ENCODE measurements at regions of chr2 and their contacts with region 1.

Region 1: GRCh38 chr2:9555297-9556141 is at the start of gene ADAM17:
- DNase-seq: peak; percentile 96 to 97 (median 97)
- H3K4me3 ChIP-seq: peak within 1 kb of the TSS; percentile 68 to 100 (median 99)
- H3K4me3 Mint-ChIP-seq: peak within 1 kb of the TSS; percentile 96 to 98
- H3K27ac ChIP-seq: peak within 1 kb of the TSS; percentile 98 to 99
- H3K27ac Mint-ChIP-seq: peak within 1 kb of the TSS; percentile 98 to 100 (median 99)
- H3K4me1 ChIP-seq: peaks cover 45 to 54% of the 10 kb centered on the region in 2 donors
- H3K4me1 Mint-ChIP-seq: peaks cover 46% of the 10 kb centered on the region
- H3K27me3 ChIP-seq: no peaks in the 10 kb centered on the region
- H3K27me3 Mint-ChIP-seq: peaks cover 0 to 6% (median 4%) of the 10 kb centered on the region in 3 donors
- CTCF ChIP-seq: no peak
- polyA plus RNA-seq, gene ADAM17: 30.2 to 34.8 (median 30.9) TPM

Region 2: DNA sequence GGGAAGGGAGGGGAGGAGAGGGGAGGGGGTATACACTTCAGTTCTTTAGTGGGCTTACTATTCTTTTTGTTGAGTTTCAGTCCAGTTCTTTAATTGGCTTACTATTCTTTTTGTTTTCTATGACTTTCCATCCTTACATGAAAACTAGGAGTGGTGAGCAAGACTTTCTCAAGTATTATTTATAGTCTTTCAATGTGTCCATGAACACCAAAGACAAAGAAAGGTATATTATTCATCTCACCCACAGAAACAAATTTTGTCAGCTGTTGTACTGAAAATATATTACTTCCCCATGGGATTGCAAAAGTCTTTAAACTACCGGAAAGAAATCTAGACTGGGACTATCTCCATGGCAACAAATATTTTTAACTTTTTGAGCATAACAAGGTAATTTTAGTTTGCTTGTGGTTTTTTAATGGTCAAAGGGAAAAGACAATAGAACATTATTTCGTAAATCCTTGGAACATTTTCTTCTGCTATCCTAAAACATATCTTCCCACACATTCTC is 17.5 kb before region 1 on chr2:
- intact Hi-C with region 1: loop called (anchors 1 to 2 kb)
- DNase-seq: peak; percentile 83 to 99 (median 90)
- H3K4me3 ChIP-seq: peak overlapping the region in 1 of 3 experiments; percentile 36
- H3K4me3 Mint-ChIP-seq: no peak overlapping the region
- H3K27ac ChIP-seq: peak overlapping the region; percentile 80 to 93
- H3K27ac Mint-ChIP-seq: peak overlapping the region; percentile 95 to 99 (median 97)
- H3K4me1 ChIP-seq: peaks cover 20 to 37% of the 10 kb centered on the region in 2 donors
- H3K4me1 Mint-ChIP-seq: peaks cover 41% of the 10 kb centered on the region
- H3K27me3 ChIP-seq: no peaks in the 10 kb centered on the region
- H3K27me3 Mint-ChIP-seq: peaks cover 0 to 1% (median 1%) of the 10 kb centered on the region in 3 donors
- CTCF ChIP-seq: no peak

Region 3: DNA sequence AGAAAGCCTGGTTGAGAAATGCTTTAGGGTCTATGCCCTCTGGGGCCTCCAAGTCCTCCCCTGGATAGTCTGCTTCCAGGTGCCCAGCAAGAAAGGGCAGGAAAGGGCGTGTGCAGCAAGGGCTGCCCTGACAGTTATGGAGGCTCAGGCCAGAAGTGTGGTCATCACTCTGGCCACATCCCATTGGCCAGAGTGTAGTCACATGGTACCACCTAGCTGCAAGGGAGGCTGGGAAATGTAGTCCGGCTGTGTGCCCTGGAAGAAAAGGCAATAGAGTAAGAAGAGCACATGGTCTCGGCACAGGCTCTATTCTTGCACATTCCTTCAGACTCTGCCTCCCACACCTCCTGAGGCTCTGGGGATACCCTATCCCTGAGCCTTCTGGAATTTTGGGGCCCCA is 856.9 kb after region 1 on chr2:
- intact Hi-C with region 1: no loop called
- DNase-seq: peak; percentile 49 to 68 (median 61)
- H3K4me3 ChIP-seq: no peak overlapping the region
- H3K4me3 Mint-ChIP-seq: no peak overlapping the region
- H3K27ac ChIP-seq: peak overlapping the region in 1 of 2 donors; percentile 87
- H3K27ac Mint-ChIP-seq: peak overlapping the region; percentile 33 to 98 (median 94)
- H3K4me1 ChIP-seq: peaks cover 41 to 42% of the 10 kb centered on the region in 2 donors
- H3K4me1 Mint-ChIP-seq: peaks cover 52% of the 10 kb centered on the region
- H3K27me3 ChIP-seq: no peaks in the 10 kb centered on the region
- H3K27me3 Mint-ChIP-seq: peaks cover 0 to 7% (median 0%) of the 10 kb centered on the region in 3 donors
- CTCF ChIP-seq: no peak

Measured in CD14-positive monocyte (primary cell).